Caco-2 (cell line): ENCODE measurements at regions of chr19 and their contacts with region 1.

Region 1: DNA sequence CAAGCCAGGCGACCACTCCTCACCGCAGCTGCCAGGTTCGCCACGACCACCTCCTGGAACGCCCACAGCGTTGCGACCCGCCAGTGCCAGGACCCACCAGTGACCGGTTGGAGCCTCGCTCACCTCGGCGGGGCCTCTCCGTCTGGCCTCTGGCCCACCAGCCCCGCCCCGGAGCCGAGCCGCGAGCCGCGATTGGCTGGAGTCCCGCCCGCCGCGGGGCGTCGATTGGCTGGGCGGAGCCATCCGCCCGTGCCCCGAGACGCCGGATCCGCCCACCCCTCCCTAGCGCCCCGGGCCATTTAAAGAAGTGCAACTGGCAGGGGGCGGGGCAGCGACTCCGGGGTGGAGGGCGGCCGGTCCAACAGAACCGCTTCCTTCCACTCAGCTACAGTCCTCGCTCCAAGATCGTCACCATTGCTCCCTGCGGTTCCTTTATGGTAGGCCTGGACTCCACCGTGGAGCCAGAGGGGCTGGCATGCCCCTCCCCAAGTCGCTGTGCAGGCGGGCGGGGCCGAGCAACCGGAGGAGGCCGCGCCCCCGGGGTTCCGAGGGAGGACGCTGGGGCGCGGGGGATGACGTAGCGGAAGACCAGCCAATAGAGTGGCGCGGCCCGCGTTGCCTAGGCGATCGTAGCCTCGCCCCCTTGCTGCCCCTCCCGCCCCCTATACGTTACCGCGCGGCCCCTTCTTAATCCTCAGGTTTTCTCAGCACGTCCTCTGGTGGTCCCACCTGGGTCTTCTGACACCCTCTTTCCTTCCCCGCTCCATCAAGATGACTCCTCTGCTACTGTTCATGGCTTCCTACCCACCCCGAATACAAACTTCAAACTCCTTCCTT is at the start of gene SERTAD3:
- DNase-seq: peak; percentile 97 to 99
- H3K4me3 ChIP-seq: peak within 1 kb of the TSS; percentile 90
- H3K4me3 Mint-ChIP-seq: peak within 1 kb of the TSS; percentile 97
- H3K27ac Mint-ChIP-seq: peak within 1 kb of the TSS; percentile 98
- H3K4me1 ChIP-seq: peaks cover 23% of the 10 kb centered on the region
- H3K4me1 Mint-ChIP-seq: peaks cover 9% of the 10 kb centered on the region
- H3K27me3 ChIP-seq: no peaks in the 10 kb centered on the region
- H3K27me3 Mint-ChIP-seq: no peaks in the 10 kb centered on the region
- CTCF ChIP-seq: peak in 1 of 2 experiments; percentile 61
- total RNA-seq, gene SERTAD3: 45.2 and 52.2 TPM in 2 replicates

Region 2: DNA sequence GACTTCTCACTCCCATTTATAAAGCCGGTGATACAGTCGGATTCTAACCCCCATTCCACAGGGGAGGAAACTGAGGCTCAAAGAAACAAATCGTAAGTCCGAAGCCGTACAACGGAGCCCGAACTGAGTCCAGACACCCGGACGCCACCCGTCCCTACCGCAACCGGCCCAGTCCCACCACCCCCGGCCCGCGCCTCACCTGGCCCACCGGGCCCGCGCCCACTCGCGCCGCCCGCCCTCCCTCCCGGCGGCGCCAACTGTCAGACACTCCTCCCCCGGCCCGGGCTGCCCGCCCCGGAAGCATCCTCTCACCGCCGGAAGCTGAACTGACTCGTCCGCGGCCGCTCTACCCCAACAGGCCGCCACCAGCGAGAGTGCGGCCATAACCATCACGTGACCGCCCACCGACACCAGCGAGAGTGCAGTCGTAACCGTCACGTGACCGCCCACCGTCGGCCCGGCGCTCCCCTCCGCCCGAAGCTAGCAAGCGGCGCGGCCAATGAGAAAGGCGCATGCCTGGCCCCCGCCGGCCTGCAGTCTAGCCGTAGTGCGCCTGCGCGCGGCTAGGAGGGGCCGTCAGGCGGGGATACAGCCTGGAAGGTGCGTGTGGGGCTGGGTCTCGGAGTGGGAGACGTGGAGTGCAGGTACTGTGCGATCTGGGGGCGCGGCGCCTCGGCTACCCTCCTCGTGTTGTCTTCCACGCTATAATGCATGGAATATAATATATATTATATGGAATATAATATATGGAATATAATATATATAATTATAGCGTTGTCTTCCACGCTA is 96.1 kb before region 1 on chr19 and contains the starts of genes C19orf47 and PLD3:
- CTCF ChIA-PET with region 1: no interaction called
- POLR2A ChIA-PET with region 1: no interaction called
- intact Hi-C with region 1: loop called (anchors 1 kb)
- DNase-seq: peak; percentile 100
- H3K4me3 ChIP-seq: peak within 1 kb of the TSS; percentile 79
- H3K4me3 Mint-ChIP-seq: peak within 1 kb of the TSS; percentile 92
- H3K27ac Mint-ChIP-seq: peak within 1 kb of the TSS; percentile 85
- H3K4me1 ChIP-seq: 0 out of 2 replicates have a peak, but pooled peaks cover 5% of the 10 kb centered on the region
- H3K4me1 Mint-ChIP-seq: no peaks in the 10 kb centered on the region
- H3K27me3 ChIP-seq: no peaks in the 10 kb centered on the region
- H3K27me3 Mint-ChIP-seq: no peaks in the 10 kb centered on the region
- CTCF ChIP-seq: no peak
- total RNA-seq, gene C19orf47: 25.8 and 28.3 TPM in 2 replicates
- total RNA-seq, gene PLD3: 100 and 114 TPM in 2 replicates

Region 3: GRCh38 chr19:40403262-40403984 is 41.0 kb before region 1 on chr19:
- CTCF ChIA-PET with region 1: no interaction called
- POLR2A ChIA-PET with region 1: no interaction called
- intact Hi-C with region 1: loop called (anchors 1 kb)
- DNase-seq: peak; percentile 98
- H3K4me3 ChIP-seq: peak overlapping the region; percentile 78
- H3K4me3 Mint-ChIP-seq: peak overlapping the region; percentile 79
- H3K27ac Mint-ChIP-seq: peak overlapping the region; percentile 42
- H3K4me1 ChIP-seq: peaks cover 2% of the 10 kb centered on the region; the same call in 1 of the 2 replicates
- H3K4me1 Mint-ChIP-seq: peaks cover 23% of the 10 kb centered on the region
- H3K27me3 ChIP-seq: no peaks in the 10 kb centered on the region
- H3K27me3 Mint-ChIP-seq: no peaks in the 10 kb centered on the region
- CTCF ChIP-seq: no peak

Region 4: GRCh38 chr19:40433391-40434216 is 10.8 kb before region 1 on chr19:
- CTCF ChIA-PET with region 1: interaction called, 10 read pairs
- POLR2A ChIA-PET with region 1: interaction called, 56 read pairs
- intact Hi-C with region 1: loop called (anchors 1 kb)
- DNase-seq: peak; percentile 92
- H3K4me3 ChIP-seq: peak overlapping the region; percentile 29
- H3K4me3 Mint-ChIP-seq: peak overlapping the region; percentile 83
- H3K27ac Mint-ChIP-seq: peak overlapping the region; percentile 97
- H3K4me1 ChIP-seq: peaks cover 16% of the 10 kb centered on the region
- H3K4me1 Mint-ChIP-seq: peaks cover 8% of the 10 kb centered on the region
- H3K27me3 ChIP-seq: no peaks in the 10 kb centered on the region
- H3K27me3 Mint-ChIP-seq: no peaks in the 10 kb centered on the region
- CTCF ChIP-seq: no peak